GM12878 (cell line): ENCODE measurements at regions of chr6 and their contacts with region 1.

Region 1: GRCh38 chr6:27777614-27778355 is 134.4 kb downstream of the OR2B2 start:
- DNase-seq: no peak
- ATAC-seq: no peak
- H3K4me3 ChIP-seq: peak overlapping the region; percentile 49
- H3K27ac ChIP-seq: peak overlapping the region; percentile 86
- H3K4me1 ChIP-seq: peaks cover 17% of the 10 kb centered on the region
- H3K27me3 ChIP-seq: no peaks in the 10 kb centered on the region
- CTCF ChIP-seq: no peak
- EP300 ChIP-seq: no peak
- POLR2A ChIP-seq: no peak
- RAD21 ChIP-seq: no peak

Region 2: GRCh38 chr6:27472617-27473400 is 305.0 kb before region 1 on chr6 and contains the start of gene ZNF184:
- CTCF ChIA-PET with region 1: no interaction called
- POLR2A ChIA-PET with region 1: interaction called, 10 read pairs
- RAD21 ChIA-PET with region 1: no interaction called
- SMC1A ChIA-PET with region 1: no interaction called
- in situ Hi-C with region 1: no loop called
- intact Hi-C with region 1: no loop called
- DNase-seq: peak; percentile 89
- ATAC-seq: peak; percentile 91
- H3K4me3 ChIP-seq: peak within 1 kb of the TSS; percentile 97
- H3K27ac ChIP-seq: peak within 1 kb of the TSS; percentile 85
- H3K4me1 ChIP-seq: 0 out of 2 replicates have a peak, but pooled peaks cover 3% of the 10 kb centered on the region
- H3K27me3 ChIP-seq: no peaks in the 10 kb centered on the region
- CTCF ChIP-seq: peak in 1 of 3 experiments; percentile 20; a peak in 1 of 6 replicates
- EP300 ChIP-seq: 0 out of 4 replicates have a peak, but pooled peaks of 1 of the 2 experiments have one; percentile 7
- POLR2A ChIP-seq: peak; percentile 79
- RAD21 ChIP-seq: no peak
- polyA plus RNA-seq, gene ZNF184: 4.5 to 5.4 TPM

Region 3: DNA sequence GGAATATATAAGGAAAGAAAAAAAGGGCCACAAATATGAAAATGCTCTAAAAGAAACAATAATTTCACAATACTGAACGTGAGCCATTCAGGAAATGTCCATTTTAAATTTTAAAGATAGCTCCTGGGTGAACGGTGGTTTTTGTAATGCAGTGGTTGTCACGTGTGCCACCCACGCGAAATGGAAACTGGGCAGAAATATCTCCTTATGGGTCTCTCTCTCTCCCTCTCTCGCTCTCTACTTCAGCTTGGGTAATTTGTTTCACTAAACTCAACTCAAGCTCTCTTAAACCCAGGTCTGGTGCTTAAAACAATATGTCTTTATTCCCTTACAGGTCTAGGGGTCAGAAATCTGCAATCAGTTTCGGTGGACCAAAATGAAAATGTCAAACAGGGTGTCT is 16.4 kb before region 1 on chr6:
- CTCF ChIA-PET with region 1: interaction called, 193 read pairs
- POLR2A ChIA-PET with region 1: interaction called, 29 read pairs
- RAD21 ChIA-PET with region 1: interaction called, 43 read pairs
- SMC1A ChIA-PET with region 1: interaction called, 93 read pairs
- in situ Hi-C with region 1: no loop called
- intact Hi-C with region 1: no loop called
- DNase-seq: no peak
- ATAC-seq: peak; percentile 43
- H3K4me3 ChIP-seq: no peak overlapping the region
- H3K27ac ChIP-seq: peak overlapping the region; percentile 66
- H3K4me1 ChIP-seq: peaks cover 26% of the 10 kb centered on the region
- H3K27me3 ChIP-seq: no peaks in the 10 kb centered on the region
- CTCF ChIP-seq: no peak
- EP300 ChIP-seq: no peak
- POLR2A ChIP-seq: no peak
- RAD21 ChIP-seq: no peak